ENCODE measurements at regions of chr7 and their contacts with region 1.

Region 1: GRCh38 chr7:668139-668931 is 58.2 kb upstream of the DNAAF5 start:
- DNase-seq: no peak
- ATAC-seq: no peak

Region 2: GRCh38 chr7:391411-391951 is 276.9 kb before region 1 on chr7:
- intact Hi-C with region 1: no loop called
- DNase-seq: peak; percentile 55
- ATAC-seq: no peak

Region 3: GRCh38 chr7:418647-419280 is 249.6 kb before region 1 on chr7:
- intact Hi-C with region 1: no loop called
- DNase-seq: peak; percentile 46
- ATAC-seq: no peak

Region 4: DNA sequence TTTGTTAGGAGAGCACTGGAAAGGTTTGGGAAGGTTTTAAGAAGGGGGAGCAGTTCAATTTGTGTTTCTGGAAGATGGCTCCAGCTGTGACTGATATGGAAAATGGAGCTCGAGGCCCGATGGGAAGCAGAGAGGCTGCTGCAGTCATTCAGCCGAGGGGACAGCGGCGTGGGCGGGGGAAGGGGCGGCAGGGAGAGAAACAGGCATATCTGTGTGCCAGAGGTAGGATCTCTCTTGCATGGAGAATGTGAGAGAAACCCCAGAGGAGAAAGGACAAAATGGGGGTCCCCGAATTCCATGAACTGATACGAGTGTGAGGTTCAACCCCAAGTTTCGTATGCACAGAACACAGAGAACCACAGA is 31.5 kb after region 1 on chr7:
- intact Hi-C with region 1: loop called (anchors 5 kb)
- DNase-seq: no peak
- ATAC-seq: no peak

Region 5: DNA sequence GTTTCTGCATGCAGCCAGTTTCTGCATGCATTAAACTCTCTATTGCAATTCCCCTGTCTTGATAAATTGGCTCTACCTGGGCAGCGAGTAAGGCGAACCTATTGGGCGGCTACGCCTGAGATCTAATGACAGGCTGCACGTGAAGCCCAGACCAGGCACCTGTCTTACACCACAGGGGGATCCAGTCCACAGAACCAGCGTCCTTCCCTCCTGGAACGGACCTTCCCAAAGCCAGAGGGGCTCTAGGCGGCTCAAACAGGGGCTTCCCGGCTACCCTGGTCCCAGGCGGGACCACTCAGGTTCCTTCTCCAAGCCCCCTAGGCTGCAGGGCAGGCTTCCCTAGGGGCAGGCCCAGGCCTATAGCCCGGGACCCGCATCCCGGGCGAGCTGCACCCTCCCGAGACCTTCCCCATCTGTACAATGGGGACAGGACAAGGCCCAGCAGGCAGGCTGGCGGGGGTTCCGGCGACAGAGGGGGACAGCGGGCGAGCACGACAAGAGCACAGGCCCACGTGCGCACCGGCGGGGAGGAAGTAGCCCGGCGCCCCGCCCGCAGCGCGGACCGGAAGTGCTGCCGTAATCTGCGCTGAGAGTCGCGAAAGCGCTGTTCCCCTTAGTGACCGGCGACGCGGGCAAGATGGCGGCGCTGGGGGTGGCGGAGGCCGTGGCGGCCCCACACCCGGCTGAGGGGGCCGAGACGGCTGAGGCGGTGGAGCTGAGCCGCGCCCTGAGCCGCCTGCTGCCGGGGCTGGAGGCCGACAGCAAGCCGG is 57.9 kb after region 1 on chr7 and contains the start of gene DNAAF5:
- intact Hi-C with region 1: loop called (anchors 5 kb)
- DNase-seq: peak; percentile 94
- ATAC-seq: peak; percentile 90
- total RNA-seq, gene DNAAF5: 17.7 TPM

Region 6: GRCh38 chr7:1290026-1290678 is 621.8 kb after region 1 on chr7:
- intact Hi-C with region 1: no loop called
- DNase-seq: peak; percentile 53
- ATAC-seq: peak; percentile 32

Measured in Right ventricle myocardium inferior (tissue), 1 donor.